Left cardiac atrium (tissue), 4 donors: ENCODE measurements at regions of chr13 and their contacts with region 1.

Region 1: DNA sequence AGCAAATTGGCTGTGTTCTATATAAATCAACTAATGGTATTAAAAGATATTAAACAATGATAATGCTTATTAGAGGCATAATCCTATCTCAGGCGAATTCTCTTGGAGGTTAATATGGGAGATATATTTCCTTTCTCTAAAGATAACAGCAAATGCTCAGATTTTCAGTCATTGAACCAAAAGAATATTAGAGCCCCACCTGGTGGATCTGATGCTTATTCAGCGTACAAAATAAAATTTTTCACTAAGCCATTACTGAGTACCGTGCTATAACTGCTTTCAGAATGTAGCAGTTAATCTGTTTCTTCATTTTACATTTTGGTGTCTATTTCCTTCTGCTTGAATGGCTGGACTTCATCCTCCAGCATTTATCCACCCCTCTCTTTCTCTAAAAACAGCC is 143.3 kb upstream of the IPO5 start:
- DNase-seq: no peak
- ATAC-seq: no peak

Region 2: DNA sequence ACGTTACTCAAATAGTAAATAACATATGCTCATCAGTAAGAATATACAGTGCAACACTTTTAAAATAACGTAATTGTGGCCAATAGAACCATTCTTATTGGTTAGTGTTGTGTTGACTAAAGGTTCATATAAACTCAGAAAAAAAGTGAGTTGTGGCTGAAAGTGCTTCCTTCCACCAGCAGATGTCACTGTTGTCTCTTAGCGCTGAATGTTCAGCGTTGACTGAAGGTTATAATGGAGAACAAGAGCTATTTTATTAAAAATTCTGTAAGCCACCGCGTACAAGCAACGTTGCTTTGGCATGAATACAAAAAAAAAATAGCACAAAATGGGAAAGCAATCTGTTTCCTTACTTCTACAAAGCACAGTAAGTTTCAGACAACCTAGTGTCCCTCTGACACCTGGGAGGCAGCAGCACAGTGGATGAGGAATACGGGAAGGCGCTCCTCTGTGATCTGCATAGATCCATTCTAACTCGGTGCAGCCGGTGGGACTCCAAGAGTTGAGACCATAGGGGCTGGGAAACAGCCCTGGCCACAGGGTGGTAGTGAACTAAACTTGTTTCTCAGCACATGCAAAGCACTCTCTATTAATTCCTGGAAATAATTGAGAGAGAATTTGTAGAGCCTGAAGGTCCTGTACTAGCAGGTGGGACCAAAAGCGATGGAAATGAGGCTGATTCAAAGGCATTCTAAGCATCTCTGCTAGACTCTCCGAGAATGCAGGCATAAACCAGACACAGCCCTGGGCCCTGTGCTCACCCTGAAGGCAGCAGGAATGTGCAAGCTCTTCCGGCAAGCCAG is 791.9 kb before region 1 on chr13:
- intact Hi-C with region 1: loop called (anchors 5 to 10 kb)
- DNase-seq: no peak
- ATAC-seq: peak; percentile 57 to 68

Region 3: GRCh38 chr13:97432917-97433726 is 377.0 kb before region 1 on chr13:
- intact Hi-C with region 1: loop called in 1 of 2 experiments (anchors 10 kb)
- DNase-seq: peak; percentile 99
- ATAC-seq: peak; percentile 90 to 94

Region 4: GRCh38 chr13:98098516-98098915 is 288.4 kb after region 1 on chr13:
- intact Hi-C with region 1: no loop called
- DNase-seq: no peak
- ATAC-seq: no peak